Activated CD4-positive, alpha-beta T cell treated with anti-CD3 and anti-CD28 coated beads for 36 hours (primary cell): ENCODE measurements at regions of chr16 and their contacts with region 1.

Region 1: GRCh38 chr16:80924372-80924978 is 82.2 kb downstream of the CMC2 start:
- DNase-seq: peak; percentile 76
- ATAC-seq: peak; percentile 71
- H3K4me3 Mint-ChIP-seq: no peak overlapping the region
- H3K27ac Mint-ChIP-seq: no peak overlapping the region
- H3K4me1 Mint-ChIP-seq: no peaks in the 10 kb centered on the region
- H3K27me3 Mint-ChIP-seq: peaks cover 17% of the 10 kb centered on the region

Region 2: DNA sequence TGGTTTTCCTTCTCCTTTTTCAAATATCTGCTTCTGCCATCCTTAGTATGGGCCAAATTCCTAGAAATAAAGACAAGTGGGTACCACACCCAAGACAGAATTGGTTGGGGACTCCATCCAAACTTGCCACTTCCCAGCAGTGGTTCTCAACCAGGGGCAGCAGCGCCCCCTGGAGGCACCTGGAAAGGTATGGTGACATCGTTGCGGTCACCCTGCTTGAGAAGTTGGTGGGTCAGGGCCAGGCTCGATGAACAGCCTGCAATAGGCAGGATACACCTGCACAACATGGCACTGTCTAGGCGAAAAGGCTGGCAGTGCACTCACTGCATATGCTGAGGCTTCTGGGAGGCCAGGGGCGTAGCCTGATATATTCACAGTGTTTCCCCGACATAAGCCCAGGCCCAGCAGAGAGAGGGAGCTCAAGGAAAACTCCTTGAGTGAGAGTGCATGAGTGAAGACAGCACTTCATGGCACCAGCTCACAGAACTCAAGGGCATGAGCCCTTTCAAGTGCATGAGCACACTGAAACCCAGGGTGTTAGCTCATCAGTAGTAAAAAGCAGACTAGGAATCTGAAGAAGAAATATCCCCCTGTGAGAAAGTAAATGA is 24.5 kb after region 1 on chr16:
- CTCF ChIA-PET with region 1: interaction called, 11 read pairs
- POLR2A ChIA-PET with region 1: no interaction called
- intact Hi-C with region 1: loop called (anchors 1 kb)
- DNase-seq: peak; percentile 79
- ATAC-seq: peak; percentile 62
- H3K4me3 Mint-ChIP-seq: no peak overlapping the region
- H3K27ac Mint-ChIP-seq: no peak overlapping the region
- H3K4me1 Mint-ChIP-seq: peaks cover 22% of the 10 kb centered on the region
- H3K27me3 Mint-ChIP-seq: peaks cover 10% of the 10 kb centered on the region